ENCODE measurements at regions of chr19 and their contacts with region 1.

Region 1: DNA sequence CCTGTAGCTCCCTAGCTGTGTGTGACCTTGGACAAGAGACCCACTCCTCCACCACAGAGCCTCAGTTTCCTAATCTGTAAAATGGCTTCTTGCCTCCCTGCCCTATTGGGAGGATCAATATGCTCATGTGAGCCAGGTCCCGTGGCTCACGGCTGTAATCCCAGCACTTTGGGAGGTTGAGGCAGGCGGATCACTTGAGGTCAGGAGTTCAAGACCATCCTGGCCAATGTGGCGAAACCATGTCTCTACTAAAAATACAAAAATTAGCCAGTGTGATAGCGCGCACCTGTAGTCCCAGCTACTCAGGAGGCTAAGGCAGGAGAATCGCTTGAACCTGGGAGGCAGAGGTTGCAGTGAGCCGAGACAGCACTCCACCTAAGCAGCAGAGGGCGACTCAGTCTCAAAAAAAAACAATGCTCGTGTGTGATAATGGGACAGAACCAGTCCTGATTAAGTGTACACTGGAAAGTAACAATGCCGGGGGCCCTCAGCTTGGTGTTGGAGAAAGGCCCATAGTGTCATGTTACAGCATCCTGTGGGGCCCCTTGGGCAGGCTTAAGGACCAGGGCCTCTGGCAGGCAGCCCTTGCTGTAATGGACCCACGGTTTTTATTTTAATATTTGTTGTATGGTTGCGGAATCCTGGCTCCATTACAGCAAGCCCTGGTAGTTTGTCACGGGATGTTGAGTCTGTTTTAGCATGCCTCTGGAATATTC is 6.8 kb downstream of the RPS11 start:
- DNase-seq: no peak
- H3K4me3 ChIP-seq: no peak overlapping the region
- H3K27ac ChIP-seq: no peak overlapping the region
- H3K4me1 ChIP-seq: peaks cover under 1% of the 10 kb centered on the region
- H3K27me3 ChIP-seq: no peaks in the 10 kb centered on the region
- CTCF ChIP-seq: peak; percentile 51

Region 2: DNA sequence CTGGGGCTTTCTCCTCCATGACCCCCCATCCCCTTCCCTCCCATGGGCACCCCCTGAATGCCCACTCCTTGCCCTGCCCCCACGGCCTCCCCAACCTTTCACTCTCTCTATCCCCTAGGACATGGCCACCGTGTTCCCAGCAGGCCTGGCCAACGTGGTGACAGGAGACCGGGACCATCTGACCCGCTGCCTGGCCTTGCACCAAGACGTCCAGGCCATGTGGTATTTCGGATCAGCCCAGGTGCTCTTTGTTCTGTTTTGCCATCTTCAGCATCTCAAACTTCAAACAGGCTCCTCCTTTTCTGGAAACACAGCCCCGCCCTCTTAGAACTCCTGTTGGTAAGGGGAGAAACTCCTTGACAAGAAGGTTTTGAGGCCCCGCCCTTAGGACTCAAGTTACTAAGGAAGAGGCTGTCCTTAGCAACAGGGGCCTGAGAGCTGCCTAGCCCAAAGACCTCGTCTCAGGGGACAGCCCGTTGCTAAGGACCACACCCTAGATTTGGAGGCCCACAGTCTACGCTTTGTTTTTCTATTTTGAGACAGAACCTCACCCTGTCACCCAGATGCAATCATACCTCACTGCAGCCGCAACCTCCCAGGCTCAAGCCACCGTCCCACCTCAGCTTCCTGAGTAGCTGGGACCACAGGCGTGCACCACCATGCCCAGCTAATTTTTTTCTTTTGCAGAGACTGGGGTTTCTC is 34.1 kb before region 1 on chr19:
- intact Hi-C with region 1: no loop called
- DNase-seq: peak; percentile 67
- H3K4me3 ChIP-seq: no peak overlapping the region
- H3K27ac ChIP-seq: peak overlapping the region; percentile 47
- H3K4me1 ChIP-seq: no peaks in the 10 kb centered on the region
- H3K27me3 ChIP-seq: no peaks in the 10 kb centered on the region
- CTCF ChIP-seq: no peak

Region 3: GRCh38 chr19:49546825-49547565 is 44.0 kb after region 1 on chr19:
- intact Hi-C with region 1: loop called (anchors 2 kb)
- DNase-seq: peak; percentile 94
- H3K4me3 ChIP-seq: no peak overlapping the region
- H3K27ac ChIP-seq: peak overlapping the region; percentile 51
- H3K4me1 ChIP-seq: peaks cover 10% of the 10 kb centered on the region
- H3K27me3 ChIP-seq: no peaks in the 10 kb centered on the region
- CTCF ChIP-seq: peak; percentile 84

Region 4: DNA sequence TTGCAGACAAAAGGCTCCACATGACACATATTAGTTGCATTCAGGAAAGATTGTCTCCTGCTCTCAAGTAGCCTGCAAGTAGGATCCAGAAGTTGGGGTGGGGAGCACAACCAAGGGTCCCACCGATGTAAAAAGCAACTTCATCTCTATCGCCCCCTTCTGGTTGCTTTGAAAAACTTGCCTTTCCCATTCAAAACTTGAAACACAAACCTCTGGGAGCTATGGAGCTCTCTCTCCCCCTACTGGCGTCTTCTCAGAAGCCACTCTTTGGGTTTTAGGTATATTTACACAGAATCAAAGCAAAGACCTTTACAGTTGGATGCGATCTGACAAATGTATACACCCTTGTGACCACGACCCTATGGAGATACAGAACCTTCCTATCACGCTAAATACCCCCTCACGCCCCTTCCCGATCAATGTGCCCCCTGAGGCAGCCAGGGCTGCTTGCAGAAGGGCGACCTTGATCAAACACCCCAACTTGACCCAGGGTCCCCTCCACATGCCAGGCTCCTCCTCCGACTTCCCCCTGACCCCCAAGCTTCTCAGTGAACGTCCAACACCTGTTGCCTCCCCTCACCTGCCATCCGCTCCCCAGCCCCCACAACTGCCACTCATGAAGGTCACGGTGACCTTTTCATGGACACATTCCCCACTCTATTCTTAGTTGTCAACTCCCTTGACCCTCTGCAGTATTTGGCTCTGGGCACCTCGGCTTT is 67.3 kb after region 1 on chr19:
- intact Hi-C with region 1: loop called (anchors 1 kb)
- DNase-seq: peak; percentile 85
- H3K4me3 ChIP-seq: no peak overlapping the region
- H3K27ac ChIP-seq: no peak overlapping the region
- H3K4me1 ChIP-seq: peaks cover 22% of the 10 kb centered on the region
- H3K27me3 ChIP-seq: no peaks in the 10 kb centered on the region
- CTCF ChIP-seq: peak; percentile 99

Region 5: GRCh38 chr19:49672131-49672919 is 169.3 kb after region 1 on chr19:
- intact Hi-C with region 1: loop called (anchors 5 kb)
- DNase-seq: peak; percentile 84
- H3K4me3 ChIP-seq: no peak overlapping the region
- H3K27ac ChIP-seq: peak overlapping the region; percentile 24
- H3K4me1 ChIP-seq: no peaks in the 10 kb centered on the region
- H3K27me3 ChIP-seq: no peaks in the 10 kb centered on the region
- CTCF ChIP-seq: peak; percentile 86

Measured in colonic mucosa (tissue), 4 donors.